CD8-positive, alpha-beta T cell (primary cell): ENCODE measurements at regions of chr11 and their contacts with region 1.

Region 1: DNA sequence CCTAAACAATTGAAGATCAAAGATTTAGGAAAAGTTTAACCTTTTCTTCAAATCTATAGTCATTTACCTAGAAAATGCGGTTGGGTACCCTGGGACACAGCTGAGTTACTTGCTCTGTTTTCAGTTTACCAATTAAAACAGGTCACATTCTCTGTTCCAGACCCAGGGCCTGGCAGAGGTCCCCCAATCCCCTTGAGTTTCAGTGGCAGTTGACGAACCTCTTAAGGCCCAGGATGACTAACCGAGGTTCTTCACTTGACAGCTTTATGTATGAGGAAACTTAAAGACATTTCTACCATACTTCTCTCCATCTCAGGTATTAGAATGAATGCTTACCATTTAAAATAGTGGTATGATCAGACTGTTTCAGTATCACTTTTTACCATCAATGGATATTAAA is 16.3 kb downstream of the LDHAL6A start:
- DNase-seq: no peak
- ATAC-seq: no peak
- H3K4me3 ChIP-seq: no peak overlapping the region
- H3K4me3 Mint-ChIP-seq: no peak overlapping the region
- H3K27ac ChIP-seq: no peak overlapping the region
- H3K27ac Mint-ChIP-seq: no peak overlapping the region
- H3K4me1 ChIP-seq: no peaks in the 10 kb centered on the region
- H3K4me1 Mint-ChIP-seq: no peaks in the 10 kb centered on the region
- H3K27me3 ChIP-seq: no peaks in the 10 kb centered on the region
- H3K27me3 Mint-ChIP-seq: no peaks in the 10 kb centered on the region
- CTCF ChIP-seq: no peak

Region 2: GRCh38 chr11:18395735-18396504 is 76.1 kb before region 1 on chr11:
- CTCF ChIA-PET with region 1: no interaction called
- POLR2A ChIA-PET with region 1: interaction called, 3 read pairs
- intact Hi-C with region 1: loop called in 1 of 2 experiments (anchors 2 kb)
- DNase-seq: peak; percentile 89 to 98 (median 92)
- ATAC-seq: peak; percentile 54
- H3K4me3 ChIP-seq: peak overlapping the region; percentile 86 to 98
- H3K4me3 Mint-ChIP-seq: peak overlapping the region; percentile 97
- H3K27ac ChIP-seq: peak overlapping the region; percentile 90
- H3K27ac Mint-ChIP-seq: peak overlapping the region; percentile 96
- H3K4me1 ChIP-seq: peaks cover 22% of the 10 kb centered on the region
- H3K4me1 Mint-ChIP-seq: peaks cover 35% of the 10 kb centered on the region
- H3K27me3 ChIP-seq: no peaks in the 10 kb centered on the region
- H3K27me3 Mint-ChIP-seq: no peaks in the 10 kb centered on the region
- CTCF ChIP-seq: no peak

Region 3: GRCh38 chr11:18427240-18427639 is 44.8 kb before region 1 on chr11:
- CTCF ChIA-PET with region 1: no interaction called
- POLR2A ChIA-PET with region 1: interaction called, 5 read pairs
- intact Hi-C with region 1: loop called in 1 of 2 experiments (anchors 10 kb)
- DNase-seq: no peak
- ATAC-seq: no peak
- H3K4me3 ChIP-seq: no peak overlapping the region
- H3K4me3 Mint-ChIP-seq: no peak overlapping the region
- H3K27ac ChIP-seq: no peak overlapping the region
- H3K27ac Mint-ChIP-seq: no peak overlapping the region
- H3K4me1 ChIP-seq: no peaks in the 10 kb centered on the region
- H3K4me1 Mint-ChIP-seq: peaks cover 5% of the 10 kb centered on the region
- H3K27me3 ChIP-seq: no peaks in the 10 kb centered on the region
- H3K27me3 Mint-ChIP-seq: peaks cover 2% of the 10 kb centered on the region
- CTCF ChIP-seq: no peak